ENCODE measurements at regions of chr12 and their contacts with region 1.

Region 1: GRCh38 chr12:29552324-29552927 is 54.9 kb upstream of the OVCH1 start:
- DNase-seq: peak; percentile 83
- H3K4me3 Mint-ChIP-seq: no peak overlapping the region
- H3K27ac Mint-ChIP-seq: no peak overlapping the region
- H3K4me1 Mint-ChIP-seq: no peaks in the 10 kb centered on the region
- H3K27me3 Mint-ChIP-seq: no peaks in the 10 kb centered on the region

Region 2: DNA sequence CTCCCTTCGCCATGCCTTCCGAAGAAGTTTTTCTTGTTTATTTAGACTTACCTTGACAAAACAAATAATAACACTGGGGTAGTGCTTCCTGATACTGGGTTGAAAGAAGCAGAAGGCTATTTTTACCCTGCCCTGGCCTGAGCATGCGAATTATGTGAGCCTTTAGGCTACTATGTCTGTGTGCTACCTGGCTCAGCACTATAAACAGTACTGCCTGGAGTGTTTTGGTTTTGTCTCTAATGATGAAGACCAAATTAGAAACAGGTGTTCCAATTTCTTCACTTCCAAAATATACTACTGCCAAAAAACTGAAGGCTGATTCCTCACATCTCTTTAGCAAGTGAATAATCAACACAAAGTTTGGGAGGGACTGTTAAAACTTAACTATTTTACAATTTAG is 47.3 kb before region 1 on chr12:
- CTCF ChIA-PET with region 1: no interaction called
- intact Hi-C with region 1: no loop called
- DNase-seq: no peak
- H3K4me3 Mint-ChIP-seq: no peak overlapping the region
- H3K27ac Mint-ChIP-seq: no peak overlapping the region
- H3K4me1 Mint-ChIP-seq: no peaks in the 10 kb centered on the region
- H3K27me3 Mint-ChIP-seq: peaks cover 13% of the 10 kb centered on the region

Region 3: DNA sequence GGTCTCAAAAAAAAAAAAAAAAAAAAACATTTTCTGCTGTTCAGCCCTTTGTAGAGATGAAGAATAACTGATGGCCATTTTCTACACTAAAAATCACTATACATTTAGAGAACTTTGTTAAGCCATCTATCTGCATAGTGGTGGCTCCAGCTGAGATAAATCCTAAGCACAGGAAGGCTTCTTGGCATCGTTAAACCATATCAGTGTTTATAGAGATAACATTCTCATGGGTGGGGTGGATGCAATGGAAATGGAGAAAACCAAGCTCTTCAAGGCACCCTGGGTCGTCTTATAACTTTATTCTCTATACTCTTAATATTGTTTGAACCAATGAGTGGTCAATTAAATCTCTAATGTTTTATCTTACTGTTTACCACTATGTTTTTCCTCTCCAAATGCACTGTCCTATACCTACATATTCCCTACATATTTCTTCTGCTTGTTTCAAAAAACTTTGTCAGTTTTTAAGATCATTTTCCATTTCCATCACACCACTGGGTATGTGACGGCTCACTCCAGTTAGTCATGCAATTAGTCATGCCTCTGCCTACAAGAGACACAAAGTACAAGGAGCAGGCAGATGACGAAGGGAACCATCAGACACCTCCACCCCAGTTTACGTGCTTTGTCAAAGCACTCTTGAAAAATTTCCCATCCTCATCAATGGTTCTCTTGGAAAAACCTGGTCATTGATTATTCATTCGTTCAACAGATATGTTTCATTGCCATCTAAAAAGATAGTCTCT is 64.4 kb after region 1 on chr12:
- CTCF ChIA-PET with region 1: no interaction called
- intact Hi-C with region 1: no loop called
- DNase-seq: no peak
- H3K4me3 Mint-ChIP-seq: no peak overlapping the region
- H3K27ac Mint-ChIP-seq: no peak overlapping the region
- H3K4me1 Mint-ChIP-seq: no peaks in the 10 kb centered on the region
- H3K27me3 Mint-ChIP-seq: peaks cover 4% of the 10 kb centered on the region

Region 4: DNA sequence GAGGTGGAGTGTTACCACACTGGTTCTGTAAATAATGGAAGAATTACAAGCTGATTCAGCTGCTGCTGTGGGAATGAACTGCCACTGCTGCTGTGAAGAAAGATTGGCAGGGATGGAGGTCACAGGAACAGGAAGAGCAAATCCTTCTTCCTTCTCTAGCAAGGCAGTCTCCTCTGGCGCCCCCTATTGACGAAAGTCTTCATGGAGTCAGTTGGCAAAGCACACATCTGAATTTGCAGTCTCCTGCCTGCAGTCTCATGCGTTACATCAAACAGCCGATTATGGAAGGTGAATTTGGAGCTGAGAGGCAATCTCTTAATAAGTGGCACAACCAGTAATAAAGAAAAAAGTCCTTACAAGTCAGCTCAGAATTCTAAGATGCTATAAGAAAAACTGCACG is 337.3 kb after region 1 on chr12:
- CTCF ChIA-PET with region 1: no interaction called
- intact Hi-C with region 1: loop called (anchors 5 kb)
- DNase-seq: peak; percentile 52
- H3K4me3 Mint-ChIP-seq: no peak overlapping the region
- H3K27ac Mint-ChIP-seq: no peak overlapping the region
- H3K4me1 Mint-ChIP-seq: no peaks in the 10 kb centered on the region
- H3K27me3 Mint-ChIP-seq: no peaks in the 10 kb centered on the region

Region 5: GRCh38 chr12:30286345-30286926 is 734.0 kb after region 1 on chr12:
- CTCF ChIA-PET with region 1: no interaction called
- intact Hi-C with region 1: loop called (anchors 1 kb)
- DNase-seq: no peak
- H3K4me3 Mint-ChIP-seq: no peak overlapping the region
- H3K27ac Mint-ChIP-seq: no peak overlapping the region
- H3K4me1 Mint-ChIP-seq: no peaks in the 10 kb centered on the region
- H3K27me3 Mint-ChIP-seq: peaks cover 2% of the 10 kb centered on the region

Region 6: DNA sequence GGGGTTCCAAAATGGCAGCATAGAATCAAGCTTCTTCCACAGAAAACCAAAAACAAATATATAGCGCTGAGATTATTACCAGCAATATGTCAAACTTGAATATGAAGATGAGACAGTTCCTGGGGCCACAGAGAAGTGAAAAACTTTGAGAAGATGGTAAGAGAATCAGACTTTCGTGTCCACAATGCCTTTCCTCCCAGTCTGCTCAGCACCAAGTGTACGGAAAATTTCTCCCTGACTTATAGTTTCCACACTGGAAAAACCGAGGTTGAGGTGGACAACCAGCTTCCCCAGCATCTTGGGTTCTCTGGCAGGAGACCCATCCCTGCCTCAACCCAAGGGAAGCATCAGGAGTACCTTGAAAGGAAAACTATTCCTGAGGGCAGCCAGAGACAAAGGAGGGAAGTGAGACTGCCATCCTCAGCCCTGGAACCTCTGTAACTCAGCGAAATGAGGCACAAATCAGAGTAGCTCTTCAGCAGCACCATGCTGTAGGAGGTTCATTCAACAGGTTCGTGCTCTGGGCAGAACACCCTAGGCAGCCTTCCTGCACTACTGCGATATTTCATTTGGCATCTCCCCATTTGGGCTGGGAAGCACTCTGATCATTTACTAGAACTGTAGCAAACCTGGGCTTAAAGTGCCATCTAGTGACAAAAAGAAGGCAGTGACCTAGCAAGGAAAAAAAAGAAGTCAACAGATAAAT is 1254.7 kb after region 1 on chr12:
- CTCF ChIA-PET with region 1: interaction called, 4 read pairs
- intact Hi-C with region 1: loop called (anchors 1 kb)
- DNase-seq: peak; percentile 12
- H3K4me3 Mint-ChIP-seq: no peak overlapping the region
- H3K27ac Mint-ChIP-seq: no peak overlapping the region
- H3K4me1 Mint-ChIP-seq: no peaks in the 10 kb centered on the region
- H3K27me3 Mint-ChIP-seq: peaks cover 14% of the 10 kb centered on the region

Measured in activated naive CD4-positive, alpha-beta T cell treated with anti-CD3 and anti-CD28 coated beads for 36 hours (primary cell).